ENCODE measurements at regions of chr1 and their contacts with region 1.

Region 1: DNA sequence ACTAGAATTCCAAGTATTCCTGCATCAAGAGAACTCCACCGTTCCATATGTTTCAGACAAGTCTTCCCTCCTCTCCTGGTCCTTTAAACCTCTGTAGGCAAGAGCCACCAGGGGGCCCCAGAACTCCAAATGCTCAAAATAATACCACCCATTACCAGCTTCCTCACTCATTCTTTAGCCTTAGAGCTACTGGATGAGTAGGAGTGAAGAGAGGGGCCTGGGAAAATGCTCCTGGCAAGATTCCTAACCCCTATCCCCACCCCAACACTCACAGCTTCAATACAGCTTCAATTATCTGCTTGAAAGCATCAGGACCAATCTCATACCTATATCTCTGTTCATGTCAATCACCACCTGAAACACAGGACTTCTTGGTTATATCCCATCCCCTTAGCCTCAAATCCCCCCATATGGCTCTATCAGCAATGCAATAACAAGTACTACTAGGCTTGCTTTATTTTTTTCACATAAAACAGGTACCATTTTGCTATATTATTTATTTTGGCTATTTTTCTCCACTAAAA is 9.7 kb downstream of the TOR1AIP2 start:
- DNase-seq: peak; percentile 42 to 54 (median 53)
- H3K4me3 ChIP-seq: no peak overlapping the region
- H3K4me3 Mint-ChIP-seq: no peak overlapping the region
- H3K27ac ChIP-seq: no peak overlapping the region
- H3K27ac Mint-ChIP-seq: peak overlapping the region in 4 of 7 donors; percentile 10 to 33 (median 14)
- H3K4me1 ChIP-seq: peaks cover 17% of the 10 kb centered on the region
- H3K4me1 Mint-ChIP-seq: peaks cover 13 to 22% (median 19%) of the 10 kb centered on the region in 4 donors
- H3K27me3 ChIP-seq: no peaks in the 10 kb centered on the region
- H3K27me3 Mint-ChIP-seq: no peaks in the 10 kb centered on the region

Region 2: GRCh38 chr1:179853102-179853501 is 14.8 kb before region 1 on chr1:
- CTCF ChIA-PET with region 1: interaction called, 16 read pairs
- POLR2A ChIA-PET with region 1: no interaction called
- intact Hi-C with region 1: no loop called
- DNase-seq: no peak
- H3K4me3 ChIP-seq: no peak overlapping the region
- H3K4me3 Mint-ChIP-seq: no peak overlapping the region
- H3K27ac ChIP-seq: no peak overlapping the region
- H3K27ac Mint-ChIP-seq: no peak overlapping the region
- H3K4me1 ChIP-seq: no peaks in the 10 kb centered on the region
- H3K4me1 Mint-ChIP-seq: peaks cover 0 to 3% (median 3%) of the 10 kb centered on the region in 4 donors
- H3K27me3 ChIP-seq: no peaks in the 10 kb centered on the region
- H3K27me3 Mint-ChIP-seq: no peaks in the 10 kb centered on the region

Region 3: GRCh38 chr1:179882243-179883039 is 14.6 kb after region 1 on chr1 and contains the start of gene TOR1AIP1:
- CTCF ChIA-PET with region 1: interaction called, 21 read pairs
- POLR2A ChIA-PET with region 1: interaction called, 16 read pairs
- intact Hi-C with region 1: no loop called
- DNase-seq: peak; percentile 98 to 99 (median 98)
- H3K4me3 ChIP-seq: peak within 1 kb of the TSS; percentile 80 to 94
- H3K4me3 Mint-ChIP-seq: peak within 1 kb of the TSS; percentile 94 to 99 (median 96)
- H3K27ac ChIP-seq: peak within 1 kb of the TSS; percentile 99
- H3K27ac Mint-ChIP-seq: peak within 1 kb of the TSS; percentile 99 to 100 (median 100)
- H3K4me1 ChIP-seq: peaks cover 53% of the 10 kb centered on the region
- H3K4me1 Mint-ChIP-seq: peaks cover 31 to 77% (median 53%) of the 10 kb centered on the region in 4 donors
- H3K27me3 ChIP-seq: no peaks in the 10 kb centered on the region
- H3K27me3 Mint-ChIP-seq: no peaks in the 10 kb centered on the region
- total RNA-seq, gene TOR1AIP1: 53.8 to 61.0 TPM

Region 4: GRCh38 chr1:179888071-179888470 is 20.2 kb after region 1 on chr1:
- CTCF ChIA-PET with region 1: interaction called, 11 read pairs
- POLR2A ChIA-PET with region 1: interaction called, 16 read pairs
- intact Hi-C with region 1: no loop called
- DNase-seq: no peak
- H3K4me3 ChIP-seq: no peak overlapping the region
- H3K4me3 Mint-ChIP-seq: peak overlapping the region in 4 of 8 donors; percentile 1 to 23 (median 10)
- H3K27ac ChIP-seq: peak overlapping the region; percentile 6
- H3K27ac Mint-ChIP-seq: peak overlapping the region in 6 of 7 donors; percentile 2 to 75 (median 12)
- H3K4me1 ChIP-seq: peaks cover 57% of the 10 kb centered on the region
- H3K4me1 Mint-ChIP-seq: peaks cover 28 to 53% (median 38%) of the 10 kb centered on the region in 4 donors
- H3K27me3 ChIP-seq: no peaks in the 10 kb centered on the region
- H3K27me3 Mint-ChIP-seq: no peaks in the 10 kb centered on the region

Region 5: DNA sequence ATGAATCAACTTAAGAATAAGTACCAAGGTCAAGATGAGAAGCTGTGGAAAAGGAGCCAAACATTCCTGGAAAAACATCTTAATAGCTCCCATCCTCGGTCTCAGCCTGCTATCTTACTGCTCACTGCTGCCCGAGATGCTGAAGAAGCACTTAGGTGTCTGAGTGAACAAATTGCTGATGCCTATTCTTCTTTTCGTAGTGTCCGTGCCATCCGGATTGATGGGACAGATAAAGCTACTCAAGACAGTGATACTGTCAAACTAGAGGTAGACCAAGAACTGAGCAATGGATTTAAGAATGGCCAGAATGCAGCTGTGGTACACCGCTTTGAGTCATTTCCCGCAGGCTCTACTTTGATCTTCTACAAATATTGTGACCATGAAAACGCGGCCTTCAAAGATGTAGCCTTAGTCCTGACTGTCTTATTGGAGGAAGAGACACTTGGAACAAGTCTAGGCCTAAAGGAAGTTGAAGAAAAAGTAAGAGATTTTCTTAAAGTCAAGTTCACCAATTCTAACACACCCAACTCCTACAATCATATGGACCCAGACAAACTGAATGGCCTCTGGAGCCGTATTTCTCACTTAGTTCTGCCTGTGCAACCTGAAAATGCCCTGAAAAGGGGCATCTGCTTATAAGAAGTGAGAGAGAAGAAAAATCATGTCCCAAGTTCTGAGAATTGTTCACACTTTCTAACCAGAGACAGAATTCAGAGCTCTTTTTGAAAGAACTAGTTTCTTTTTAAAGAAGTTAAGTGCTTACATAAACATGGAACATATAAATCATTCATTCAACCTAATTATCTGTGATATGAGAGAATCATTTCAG is 49.9 kb after region 1 on chr1:
- CTCF ChIA-PET with region 1: interaction called, 14 read pairs
- POLR2A ChIA-PET with region 1: no interaction called
- intact Hi-C with region 1: no loop called
- DNase-seq: no peak
- H3K4me3 ChIP-seq: no peak overlapping the region
- H3K4me3 Mint-ChIP-seq: no peak overlapping the region
- H3K27ac ChIP-seq: no peak overlapping the region
- H3K27ac Mint-ChIP-seq: peak overlapping the region in 3 of 7 donors; percentile 5 to 46 (median 42)
- H3K4me1 ChIP-seq: no peaks in the 10 kb centered on the region
- H3K4me1 Mint-ChIP-seq: peaks cover 0 to 14% (median 7%) of the 10 kb centered on the region in 4 donors
- H3K27me3 ChIP-seq: no peaks in the 10 kb centered on the region
- H3K27me3 Mint-ChIP-seq: no peaks in the 10 kb centered on the region

Region 6: GRCh38 chr1:179984942-179985341 is 117.1 kb after region 1 on chr1:
- CTCF ChIA-PET with region 1: no interaction called
- POLR2A ChIA-PET with region 1: no interaction called
- intact Hi-C with region 1: no loop called
- DNase-seq: no peak
- H3K4me3 ChIP-seq: no peak overlapping the region
- H3K4me3 Mint-ChIP-seq: no peak overlapping the region
- H3K27ac ChIP-seq: no peak overlapping the region
- H3K27ac Mint-ChIP-seq: peak overlapping the region in 1 of 7 donors; percentile 24
- H3K4me1 ChIP-seq: peaks cover 5% of the 10 kb centered on the region
- H3K4me1 Mint-ChIP-seq: peaks cover 16 to 31% (median 20%) of the 10 kb centered on the region in 4 donors
- H3K27me3 ChIP-seq: no peaks in the 10 kb centered on the region
- H3K27me3 Mint-ChIP-seq: no peaks in the 10 kb centered on the region

Region 7: GRCh38 chr1:180028864-180029263 is 161.0 kb after region 1 on chr1:
- CTCF ChIA-PET with region 1: interaction called, 7 read pairs
- POLR2A ChIA-PET with region 1: no interaction called
- intact Hi-C with region 1: loop called (anchors 1 kb)
- DNase-seq: no peak
- H3K4me3 ChIP-seq: no peak overlapping the region
- H3K4me3 Mint-ChIP-seq: no peak overlapping the region
- H3K27ac ChIP-seq: no peak overlapping the region
- H3K27ac Mint-ChIP-seq: peak overlapping the region in 2 of 7 donors; percentile 37 to 48
- H3K4me1 ChIP-seq: no peaks in the 10 kb centered on the region
- H3K4me1 Mint-ChIP-seq: peaks cover 0 to 13% (median 2%) of the 10 kb centered on the region in 4 donors
- H3K27me3 ChIP-seq: no peaks in the 10 kb centered on the region
- H3K27me3 Mint-ChIP-seq: no peaks in the 10 kb centered on the region

Measured in CD4-positive, alpha-beta memory T cell (primary cell).